Activated B cell treated with CpG ODN at 0.5 μM for 24 hours (primary cell): ENCODE measurements at regions of chr11 and their contacts with region 1.

Region 1: DNA sequence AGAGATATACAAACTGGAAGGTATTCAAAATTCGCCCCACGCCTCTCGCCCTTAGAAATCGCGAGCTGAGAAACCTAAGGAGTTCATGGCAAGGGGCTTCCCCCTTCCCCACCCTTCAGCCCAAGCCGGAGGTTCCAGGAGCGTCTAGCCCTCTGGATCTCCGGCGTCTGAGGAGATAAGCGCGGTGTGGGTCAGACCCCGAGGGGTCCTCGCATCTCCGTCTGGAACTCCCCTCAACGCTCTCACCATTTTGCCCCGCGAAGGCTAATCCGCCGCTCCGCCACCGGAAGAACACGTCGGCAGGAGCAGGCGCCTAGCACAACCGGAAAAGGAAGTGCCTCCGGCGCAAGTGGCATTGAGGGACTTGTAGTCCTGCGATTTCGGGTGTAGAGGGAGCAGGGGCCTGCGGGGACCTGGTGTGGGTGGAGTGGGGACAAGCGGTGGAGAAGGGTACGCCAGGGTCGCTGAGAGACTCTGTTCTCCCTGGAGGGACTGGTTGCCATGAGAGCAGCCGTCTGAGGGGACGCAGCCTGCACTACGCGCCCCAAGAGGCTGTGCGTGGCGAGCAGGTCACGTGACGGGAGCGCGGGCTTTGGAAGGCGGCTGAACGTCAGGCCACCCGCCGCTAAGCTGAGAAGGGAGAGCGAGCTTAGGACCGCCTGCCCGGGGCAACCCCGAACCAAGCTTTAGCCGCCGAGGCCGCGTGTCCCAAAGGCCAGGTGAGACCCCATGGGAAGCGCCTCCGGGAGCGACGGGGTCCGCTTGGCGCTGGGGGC is at the starts of genes FEN1 and TMEM258:
- DNase-seq: peak; percentile 89
- ATAC-seq: peak; percentile 92
- H3K4me3 Mint-ChIP-seq: peak within 1 kb of the TSS; percentile 98
- H3K27ac Mint-ChIP-seq: peak within 1 kb of the TSS; percentile 100
- H3K4me1 Mint-ChIP-seq: peaks cover 24% of the 10 kb centered on the region
- H3K27me3 Mint-ChIP-seq: no peaks in the 10 kb centered on the region
- CTCF ChIP-seq: no peak
- total RNA-seq, gene FEN1: 23.9 and 25.4 TPM in 2 replicates
- total RNA-seq, gene TMEM258: 87.4 and 94.0 TPM in 2 replicates

Region 2: DNA sequence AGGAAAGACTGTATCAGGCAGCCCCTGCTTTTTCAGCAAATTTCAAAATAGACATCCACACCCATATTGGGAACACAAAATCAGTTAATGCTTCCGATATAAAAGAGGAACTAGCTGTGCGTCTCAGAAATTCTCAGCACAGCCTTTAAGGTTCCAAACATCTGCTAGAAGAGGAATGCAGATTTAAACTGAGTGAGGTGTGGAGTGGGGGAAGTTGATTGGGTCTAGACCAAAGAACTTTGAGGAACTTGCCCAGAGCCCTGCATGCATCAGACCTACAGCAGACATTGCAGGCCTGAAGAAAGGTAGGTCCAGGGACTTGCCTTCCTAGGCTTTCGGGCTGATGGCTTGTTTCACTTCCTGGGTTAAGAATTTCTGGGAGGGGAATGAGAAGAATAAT is 1512.1 kb before region 1 on chr11 and contains the start of gene MS4A4A:
- CTCF ChIA-PET with region 1: no interaction called
- POLR2A ChIA-PET with region 1: no interaction called
- intact Hi-C with region 1: no loop called
- DNase-seq: no peak
- ATAC-seq: peak; percentile 99
- H3K4me3 Mint-ChIP-seq: peak within 1 kb of the TSS; percentile 42
- H3K27ac Mint-ChIP-seq: peak within 1 kb of the TSS; percentile 78
- H3K4me1 Mint-ChIP-seq: peaks cover 24% of the 10 kb centered on the region
- H3K27me3 Mint-ChIP-seq: no peaks in the 10 kb centered on the region
- CTCF ChIP-seq: no peak
- total RNA-seq, gene MS4A4A: 0.20 and 1.4 TPM in 2 replicates

Region 3: GRCh38 chr11:61747192-61747966 is 45.1 kb before region 1 on chr11:
- CTCF ChIA-PET with region 1: interaction called, 4 read pairs
- POLR2A ChIA-PET with region 1: no interaction called
- intact Hi-C with region 1: loop called (anchors 5 kb)
- DNase-seq: peak; percentile 42
- ATAC-seq: peak; percentile 51
- H3K4me3 Mint-ChIP-seq: no peak overlapping the region
- H3K27ac Mint-ChIP-seq: no peak overlapping the region
- H3K4me1 Mint-ChIP-seq: peaks cover 4% of the 10 kb centered on the region
- H3K27me3 Mint-ChIP-seq: peaks cover 22% of the 10 kb centered on the region
- CTCF ChIP-seq: peak; percentile 39

Region 4: DNA sequence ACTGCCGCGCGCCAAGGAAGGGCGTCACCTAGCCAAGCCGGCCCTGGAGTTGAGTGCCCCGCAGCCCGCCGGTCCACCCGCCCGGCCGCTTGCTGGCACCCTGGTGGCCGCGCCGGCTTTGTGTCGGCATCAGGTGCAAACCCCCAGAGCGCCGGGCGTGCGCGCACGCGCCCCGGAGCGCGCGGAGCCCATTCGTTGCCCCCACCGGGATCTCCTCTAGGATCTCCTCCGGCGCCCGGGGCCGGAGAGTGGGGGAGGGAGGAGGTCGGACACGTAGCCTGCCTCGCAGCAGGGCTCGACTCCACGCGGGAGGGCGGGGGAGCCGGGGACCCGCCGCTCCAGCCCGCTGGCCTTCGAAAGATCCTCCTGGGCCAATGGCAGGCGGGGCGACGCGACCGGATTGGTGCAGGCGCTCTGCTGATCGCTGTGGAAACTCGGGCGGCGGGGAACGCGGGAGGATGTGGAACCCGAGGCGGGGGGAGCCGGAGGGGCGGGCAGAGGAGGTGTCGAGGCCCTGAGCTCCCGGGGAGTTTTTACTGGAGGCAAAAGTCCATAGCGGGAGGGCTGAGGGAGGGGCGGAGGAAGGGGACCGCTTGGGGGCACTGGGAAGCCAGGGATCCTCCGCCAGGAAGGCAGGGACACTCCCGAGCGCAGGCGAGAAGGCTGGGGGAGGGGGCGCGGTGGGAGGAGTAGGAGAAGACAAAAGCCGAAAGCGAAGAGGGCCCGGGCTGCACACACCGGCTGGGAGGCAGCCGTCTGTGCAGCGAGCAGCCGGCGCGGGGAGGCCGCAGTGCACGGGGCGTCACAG is 35.3 kb after region 1 on chr11 and contains the start of gene FADS2:
- CTCF ChIA-PET with region 1: interaction called, 4 read pairs
- POLR2A ChIA-PET with region 1: interaction called, 7 read pairs
- intact Hi-C with region 1: loop called (anchors 2 kb)
- DNase-seq: peak; percentile 64
- ATAC-seq: peak; percentile 77
- H3K4me3 Mint-ChIP-seq: peak within 1 kb of the TSS; percentile 89
- H3K27ac Mint-ChIP-seq: peak within 1 kb of the TSS; percentile 86
- H3K4me1 Mint-ChIP-seq: peaks cover 26% of the 10 kb centered on the region
- H3K27me3 Mint-ChIP-seq: peaks cover 8% of the 10 kb centered on the region
- CTCF ChIP-seq: no peak
- total RNA-seq, gene FADS2: 10.9 and 13.4 TPM in 2 replicates

Region 5: GRCh38 chr11:61947486-61948210 is 155.2 kb after region 1 on chr11:
- CTCF ChIA-PET with region 1: interaction called, 84 read pairs
- POLR2A ChIA-PET with region 1: interaction called, 3 read pairs
- intact Hi-C with region 1: loop called (anchors 1 kb)
- DNase-seq: peak; percentile 51
- ATAC-seq: peak; percentile 92
- H3K4me3 Mint-ChIP-seq: no peak overlapping the region
- H3K27ac Mint-ChIP-seq: no peak overlapping the region
- H3K4me1 Mint-ChIP-seq: peaks cover 11% of the 10 kb centered on the region
- H3K27me3 Mint-ChIP-seq: no peaks in the 10 kb centered on the region
- CTCF ChIP-seq: peak; percentile 35

Region 6: DNA sequence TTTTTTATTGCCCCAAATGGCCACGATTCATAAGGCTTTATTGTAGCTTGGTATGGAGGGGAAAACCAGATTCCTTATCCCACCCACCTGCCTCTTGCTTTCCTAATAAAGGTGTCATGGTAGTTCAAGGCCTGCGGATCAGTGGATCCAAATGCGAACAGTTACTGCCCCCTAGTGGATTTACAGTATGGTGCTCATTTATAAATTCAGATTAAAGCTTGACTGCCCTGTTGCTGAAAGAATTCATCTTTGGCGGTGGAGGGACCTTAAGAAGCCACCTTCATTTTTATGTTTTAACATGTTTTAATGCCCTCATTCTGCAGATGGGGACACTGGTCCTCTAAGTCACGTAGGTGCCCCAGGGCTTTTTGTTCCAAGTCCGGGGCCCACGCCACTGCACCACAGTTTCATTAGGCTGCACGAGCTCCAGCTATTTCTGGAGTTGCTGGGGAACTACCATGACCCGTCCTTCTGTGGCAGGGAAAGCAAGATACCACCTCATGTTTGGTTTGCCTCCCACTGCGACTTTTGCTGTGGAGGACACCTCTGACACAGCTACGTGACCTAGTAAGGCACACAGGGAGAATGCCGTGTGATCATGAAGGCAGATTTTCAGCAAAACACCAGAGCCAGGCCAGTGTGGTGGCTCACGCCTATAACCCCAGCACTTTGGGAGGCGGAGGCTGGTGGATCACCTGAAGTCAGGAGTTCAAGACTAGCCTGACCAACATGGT is 315.7 kb after region 1 on chr11:
- CTCF ChIA-PET with region 1: interaction called, 146 read pairs
- POLR2A ChIA-PET with region 1: interaction called, 11 read pairs
- intact Hi-C with region 1: loop called (anchors 1 kb)
- DNase-seq: no peak
- ATAC-seq: peak; percentile 50
- H3K4me3 Mint-ChIP-seq: no peak overlapping the region
- H3K27ac Mint-ChIP-seq: no peak overlapping the region
- H3K4me1 Mint-ChIP-seq: peaks cover 7% of the 10 kb centered on the region
- H3K27me3 Mint-ChIP-seq: peaks cover 4% of the 10 kb centered on the region
- CTCF ChIP-seq: peak; percentile 33

Region 7: DNA sequence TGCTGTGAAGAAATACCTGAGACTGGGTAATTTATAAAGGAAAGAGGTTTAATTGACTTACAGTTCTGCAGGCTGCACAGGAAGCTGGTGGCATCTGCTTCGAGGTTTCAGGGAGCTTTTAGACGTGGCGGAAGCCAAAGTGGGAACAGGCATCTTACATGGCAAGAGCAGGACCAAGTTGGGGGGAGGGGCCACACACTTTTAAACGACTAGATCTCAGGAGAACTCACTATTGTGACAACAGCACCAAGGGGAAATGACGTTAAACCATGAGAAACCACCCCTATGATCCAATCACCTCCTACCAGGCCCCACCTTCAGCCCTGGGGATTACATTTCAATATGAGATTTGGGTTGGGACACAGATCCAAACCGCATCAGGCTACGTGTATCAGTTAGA is 517.5 kb after region 1 on chr11:
- CTCF ChIA-PET with region 1: interaction called, 17 read pairs
- POLR2A ChIA-PET with region 1: no interaction called
- intact Hi-C with region 1: loop called (anchors 1 kb)
- DNase-seq: no peak
- ATAC-seq: no peak
- H3K4me3 Mint-ChIP-seq: no peak overlapping the region
- H3K27ac Mint-ChIP-seq: no peak overlapping the region
- H3K4me1 Mint-ChIP-seq: peaks cover 12% of the 10 kb centered on the region
- H3K27me3 Mint-ChIP-seq: peaks cover 53% of the 10 kb centered on the region
- CTCF ChIP-seq: no peak

Region 8: GRCh38 chr11:62705880-62706849 is 913.7 kb after region 1 on chr11:
- CTCF ChIA-PET with region 1: no interaction called
- POLR2A ChIA-PET with region 1: no interaction called
- intact Hi-C with region 1: loop called (anchors 2 kb)
- DNase-seq: peak; percentile 90
- ATAC-seq: peak; percentile 73
- H3K4me3 Mint-ChIP-seq: peak overlapping the region; percentile 92
- H3K27ac Mint-ChIP-seq: peak overlapping the region; percentile 99
- H3K4me1 Mint-ChIP-seq: peaks cover 49% of the 10 kb centered on the region
- H3K27me3 Mint-ChIP-seq: no peaks in the 10 kb centered on the region
- CTCF ChIP-seq: no peak